GM12878 (cell line): ENCODE measurements at regions of chr11 and their contacts with region 1.

Region 1: DNA sequence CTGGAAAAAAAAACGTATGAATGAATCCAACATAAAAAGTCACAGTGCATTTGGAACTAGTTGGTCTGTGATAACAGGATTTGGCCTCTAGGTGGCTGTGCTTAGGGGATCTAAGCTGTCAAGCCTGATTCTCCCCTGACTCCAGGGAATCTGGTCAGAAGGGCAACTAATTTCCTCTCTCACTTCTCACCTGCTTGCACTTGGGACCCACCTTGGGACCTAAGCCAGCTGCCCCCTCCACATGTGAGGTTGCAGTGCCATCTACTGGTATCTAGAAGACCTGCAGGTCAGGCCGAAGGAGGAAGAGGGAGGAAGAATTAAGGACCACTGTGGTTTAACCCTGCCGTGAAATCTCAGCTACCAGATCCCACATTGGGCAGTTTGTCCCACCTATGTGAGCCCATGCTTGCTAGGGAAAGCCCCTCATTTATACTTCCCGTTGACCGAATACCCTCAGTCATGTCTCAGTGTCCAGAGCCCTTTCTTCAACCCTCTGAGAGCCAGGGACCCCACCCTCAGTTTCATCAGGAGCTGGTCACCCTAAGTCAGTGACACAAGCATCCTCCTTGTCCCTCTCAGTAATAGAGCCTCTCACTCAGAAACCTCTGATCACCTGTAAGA is 33.2 kb upstream of the CAVIN3 start:
- DNase-seq: peak; percentile 25
- ATAC-seq: peak; percentile 91
- H3K4me3 ChIP-seq: no peak overlapping the region
- H3K27ac ChIP-seq: no peak overlapping the region
- H3K4me1 ChIP-seq: no peaks in the 10 kb centered on the region
- H3K27me3 ChIP-seq: no peaks in the 10 kb centered on the region
- CTCF ChIP-seq: peak; percentile 97 to 98 (median 98)
- EP300 ChIP-seq: no peak
- POLR2A ChIP-seq: no peak
- RAD21 ChIP-seq: peak; percentile 99

Region 2: DNA sequence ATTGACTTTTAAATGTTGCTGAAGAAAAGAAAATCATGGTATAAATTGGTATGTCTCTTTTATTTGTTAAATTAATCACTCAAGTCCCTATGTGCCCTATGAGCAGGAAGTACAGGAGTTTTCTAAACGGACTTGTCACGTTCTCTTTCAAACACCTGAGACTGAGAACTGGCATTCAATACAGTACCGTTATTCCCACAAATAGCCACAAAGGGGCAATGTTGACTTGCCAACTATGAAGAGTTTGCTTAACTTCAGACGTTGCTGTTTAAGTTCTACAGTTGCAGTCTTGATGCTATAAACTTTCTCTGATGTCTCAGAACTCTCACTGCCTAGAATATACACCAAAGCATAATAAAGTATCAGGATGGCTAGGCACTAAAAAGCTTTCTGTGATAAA is 330.5 kb before region 1 on chr11:
- CTCF ChIA-PET with region 1: interaction called, 12 read pairs
- POLR2A ChIA-PET with region 1: no interaction called
- RAD21 ChIA-PET with region 1: interaction called, 5 read pairs
- SMC1A ChIA-PET with region 1: interaction called, 13 read pairs
- in situ Hi-C with region 1: no loop called
- intact Hi-C with region 1: loop called (anchors 1 kb)
- DNase-seq: peak; percentile 5
- ATAC-seq: peak; percentile 76
- H3K4me3 ChIP-seq: no peak overlapping the region
- H3K27ac ChIP-seq: no peak overlapping the region
- H3K4me1 ChIP-seq: no peaks in the 10 kb centered on the region
- H3K27me3 ChIP-seq: no peaks in the 10 kb centered on the region
- CTCF ChIP-seq: peak; percentile 49 to 59 (median 53); a peak in 5 of 6 replicates
- EP300 ChIP-seq: no peak
- POLR2A ChIP-seq: no peak
- RAD21 ChIP-seq: peak; percentile 75

Region 3: GRCh38 chr11:6283453-6284023 is 69.9 kb before region 1 on chr11:
- CTCF ChIA-PET with region 1: interaction called, 12 read pairs
- POLR2A ChIA-PET with region 1: no interaction called
- RAD21 ChIA-PET with region 1: no interaction called
- SMC1A ChIA-PET with region 1: interaction called, 4 read pairs
- in situ Hi-C with region 1: no loop called
- intact Hi-C with region 1: no loop called
- DNase-seq: no peak
- ATAC-seq: no peak
- H3K4me3 ChIP-seq: no peak overlapping the region
- H3K27ac ChIP-seq: no peak overlapping the region
- H3K4me1 ChIP-seq: no peaks in the 10 kb centered on the region
- H3K27me3 ChIP-seq: peaks cover 2 to 4% of the 10 kb centered on the region in 2 experiments; a peak in 3 of 4 replicates
- CTCF ChIP-seq: no peak
- EP300 ChIP-seq: no peak
- POLR2A ChIP-seq: no peak
- RAD21 ChIP-seq: no peak

Region 4: GRCh38 chr11:6315811-6316425 is 37.6 kb before region 1 on chr11:
- CTCF ChIA-PET with region 1: interaction called, 73 read pairs
- POLR2A ChIA-PET with region 1: interaction called, 4 read pairs
- RAD21 ChIA-PET with region 1: interaction called, 4 read pairs
- SMC1A ChIA-PET with region 1: interaction called, 15 read pairs
- in situ Hi-C with region 1: no loop called
- intact Hi-C with region 1: loop called (anchors 1 kb)
- DNase-seq: no peak
- ATAC-seq: peak; percentile 86
- H3K4me3 ChIP-seq: no peak overlapping the region
- H3K27ac ChIP-seq: no peak overlapping the region
- H3K4me1 ChIP-seq: peaks cover 15% of the 10 kb centered on the region
- H3K27me3 ChIP-seq: no peaks in the 10 kb centered on the region; a peak in 1 of 4 replicates
- CTCF ChIP-seq: peak; percentile 78 to 88 (median 85)
- EP300 ChIP-seq: no peak
- POLR2A ChIP-seq: no peak
- RAD21 ChIP-seq: peak; percentile 83